PC-9 (cell line): ENCODE measurements at regions of chr10 and their contacts with region 1.

Region 1: GRCh38 chr10:68090586-68090985 is 15.5 kb upstream of the HERC4 start:
- DNase-seq: no peak
- H3K4me3 ChIP-seq: peak overlapping the region; percentile 73
- H3K27ac ChIP-seq: peak overlapping the region; percentile 95
- H3K4me1 ChIP-seq: peaks cover 83% of the 10 kb centered on the region
- H3K27me3 ChIP-seq: no peaks in the 10 kb centered on the region
- CTCF ChIP-seq: no peak

Region 2: DNA sequence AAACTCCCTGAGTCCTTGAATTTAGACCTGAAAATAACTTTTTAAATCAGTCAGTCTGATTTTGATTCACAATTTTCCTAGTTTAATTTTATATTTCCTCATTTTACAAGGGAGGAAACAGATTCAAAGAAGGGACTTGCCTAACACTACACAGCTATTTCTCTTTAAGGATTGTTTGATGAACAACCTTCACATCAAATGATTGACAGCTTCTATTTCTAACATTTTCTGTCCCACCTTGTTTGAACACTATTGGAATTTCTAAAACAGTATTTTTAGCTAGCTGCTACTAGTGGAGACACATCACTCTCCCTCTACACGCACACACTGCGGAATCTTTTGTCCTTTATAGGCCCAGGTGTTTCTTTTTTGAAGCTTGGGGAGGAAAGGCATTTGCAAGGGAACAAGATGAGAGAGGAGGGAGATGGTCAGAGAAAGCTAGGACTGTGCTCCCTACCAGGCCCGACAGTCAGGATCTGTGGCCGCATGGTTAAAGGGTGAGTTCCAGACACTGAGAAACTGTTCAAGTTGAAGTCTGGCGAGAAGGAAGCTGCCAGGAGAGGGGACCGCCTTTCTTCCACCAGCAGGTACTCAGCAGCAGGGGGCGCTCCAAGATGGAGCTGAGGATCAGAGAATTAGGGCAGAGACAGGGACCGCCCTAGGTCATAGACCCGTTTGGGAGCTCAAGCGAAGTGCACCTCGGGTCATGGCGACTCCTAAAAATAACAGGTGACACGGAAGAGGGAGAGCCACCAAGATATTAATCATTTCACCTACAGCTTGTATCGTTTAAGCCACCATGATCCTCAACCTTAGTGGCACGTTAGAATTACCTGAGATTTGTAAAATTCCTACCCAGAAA is 302.3 kb before region 1 on chr10:
- CTCF ChIA-PET with region 1: interaction called, 10 read pairs
- POLR2A ChIA-PET with region 1: no interaction called
- intact Hi-C with region 1: no loop called
- DNase-seq: peak in 1 of 2 experiments; percentile 57
- H3K4me3 ChIP-seq: no peak overlapping the region
- H3K27ac ChIP-seq: no peak overlapping the region
- H3K4me1 ChIP-seq: peaks cover 15% of the 10 kb centered on the region; the same call in 1 of the 2 replicates
- H3K27me3 ChIP-seq: no peaks in the 10 kb centered on the region
- CTCF ChIP-seq: peak; percentile 73

Region 3: GRCh38 chr10:68043030-68043429 is 47.6 kb before region 1 on chr10:
- CTCF ChIA-PET with region 1: no interaction called
- POLR2A ChIA-PET with region 1: no interaction called
- intact Hi-C with region 1: no loop called
- DNase-seq: no peak
- H3K4me3 ChIP-seq: no peak overlapping the region
- H3K27ac ChIP-seq: no peak overlapping the region; the same call in 1 of the 2 replicates
- H3K4me1 ChIP-seq: 0 out of 2 replicates have a peak, but pooled peaks cover 6% of the 10 kb centered on the region
- H3K27me3 ChIP-seq: no peaks in the 10 kb centered on the region
- CTCF ChIP-seq: no peak

Region 4: DNA sequence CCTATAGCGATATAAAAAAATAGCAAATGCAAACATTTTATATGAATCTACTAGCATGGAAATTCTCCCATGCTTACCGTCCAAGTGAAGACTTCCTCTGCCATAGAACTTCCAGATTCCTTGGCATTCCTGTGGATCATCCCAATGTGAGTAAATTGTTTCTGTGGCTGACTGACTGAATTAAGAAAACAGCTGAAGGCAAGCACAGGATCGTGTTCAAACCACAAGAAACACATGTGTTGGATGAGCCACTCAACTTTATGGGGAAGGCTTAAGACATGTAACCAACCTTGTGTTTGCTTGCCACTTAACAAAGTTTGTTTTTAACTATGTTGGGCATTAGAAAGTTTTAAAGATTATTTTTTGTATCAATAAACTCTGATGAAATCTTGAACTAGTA is 16.1 kb after region 1 on chr10:
- CTCF ChIA-PET with region 1: interaction called, 11 read pairs
- POLR2A ChIA-PET with region 1: no interaction called
- intact Hi-C with region 1: no loop called
- DNase-seq: no peak
- H3K4me3 ChIP-seq: no peak overlapping the region
- H3K27ac ChIP-seq: no peak overlapping the region
- H3K4me1 ChIP-seq: peaks cover 32% of the 10 kb centered on the region
- H3K27me3 ChIP-seq: no peaks in the 10 kb centered on the region
- CTCF ChIP-seq: no peak